Lower lobe of right lung (tissue), 2 donors: ENCODE measurements at regions of chr18 and their contacts with region 1.

Region 1: GRCh38 chr18:21191596-21192307 is 50.3 kb upstream of the GREB1L start:
- DNase-seq: peak; percentile 61
- ATAC-seq: peak; percentile 71 to 75
- H3K4me3 ChIP-seq: no peak overlapping the region
- H3K27ac ChIP-seq: no peak overlapping the region
- H3K4me1 ChIP-seq: no peaks in the 10 kb centered on the region
- H3K27me3 ChIP-seq: no peaks in the 10 kb centered on the region
- CTCF ChIP-seq: peak; percentile 57

Region 2: DNA sequence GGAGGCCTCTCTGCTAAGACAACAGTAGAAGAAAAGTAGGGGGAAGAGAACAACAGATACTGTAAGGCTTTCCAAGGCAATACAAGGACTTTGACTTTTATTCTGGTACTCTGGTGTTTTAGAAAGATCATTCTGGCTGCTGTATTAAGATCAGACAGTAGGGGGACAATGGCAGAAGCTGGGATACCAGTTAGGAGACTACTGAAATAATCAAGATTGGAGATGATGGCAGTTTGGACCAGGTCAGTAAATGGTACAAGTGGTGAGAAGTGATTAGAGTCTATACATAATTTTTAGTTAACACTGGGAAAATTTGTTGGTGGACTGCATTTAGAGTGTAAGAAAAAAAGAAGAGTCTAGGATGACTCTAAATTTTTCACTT is 219.9 kb before region 1 on chr18:
- intact Hi-C with region 1: no loop called
- DNase-seq: no peak
- ATAC-seq: peak in 1 of 2 donors; percentile 45
- H3K4me3 ChIP-seq: no peak overlapping the region
- H3K27ac ChIP-seq: no peak overlapping the region
- H3K4me1 ChIP-seq: no peaks in the 10 kb centered on the region
- H3K27me3 ChIP-seq: no peaks in the 10 kb centered on the region
- CTCF ChIP-seq: peak; percentile 45

Region 3: DNA sequence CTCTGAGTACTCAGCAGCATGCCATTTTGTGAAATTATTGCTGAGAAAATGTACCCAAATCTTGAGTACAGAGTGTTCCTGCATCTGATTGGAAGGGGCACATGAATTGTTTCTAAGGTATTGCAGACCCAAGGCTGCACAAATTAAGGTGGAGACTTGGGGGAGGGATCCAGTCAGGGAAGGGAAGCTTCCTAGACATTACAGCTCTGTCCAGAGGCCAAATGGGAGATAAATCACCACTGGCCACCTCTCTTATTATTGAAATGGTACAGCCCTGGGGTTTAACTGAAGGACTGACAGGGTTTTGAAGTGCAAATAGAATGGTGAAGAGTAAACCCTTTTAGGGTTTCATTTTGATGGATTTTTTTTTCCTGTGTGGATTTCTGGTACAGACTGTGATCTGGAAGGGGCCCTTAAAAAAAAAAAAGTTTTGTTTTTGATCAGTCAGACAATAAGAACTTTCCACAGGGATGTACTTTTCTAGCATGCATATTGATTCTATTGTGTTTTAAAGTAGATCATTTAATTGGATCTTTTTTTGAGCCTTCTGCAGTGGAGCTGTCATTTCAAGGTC is 169.6 kb after region 1 on chr18:
- intact Hi-C with region 1: no loop called
- DNase-seq: no peak
- ATAC-seq: no peak
- H3K4me3 ChIP-seq: no peak overlapping the region
- H3K27ac ChIP-seq: no peak overlapping the region
- H3K4me1 ChIP-seq: no peaks in the 10 kb centered on the region
- H3K27me3 ChIP-seq: no peaks in the 10 kb centered on the region
- CTCF ChIP-seq: no peak

Region 4: DNA sequence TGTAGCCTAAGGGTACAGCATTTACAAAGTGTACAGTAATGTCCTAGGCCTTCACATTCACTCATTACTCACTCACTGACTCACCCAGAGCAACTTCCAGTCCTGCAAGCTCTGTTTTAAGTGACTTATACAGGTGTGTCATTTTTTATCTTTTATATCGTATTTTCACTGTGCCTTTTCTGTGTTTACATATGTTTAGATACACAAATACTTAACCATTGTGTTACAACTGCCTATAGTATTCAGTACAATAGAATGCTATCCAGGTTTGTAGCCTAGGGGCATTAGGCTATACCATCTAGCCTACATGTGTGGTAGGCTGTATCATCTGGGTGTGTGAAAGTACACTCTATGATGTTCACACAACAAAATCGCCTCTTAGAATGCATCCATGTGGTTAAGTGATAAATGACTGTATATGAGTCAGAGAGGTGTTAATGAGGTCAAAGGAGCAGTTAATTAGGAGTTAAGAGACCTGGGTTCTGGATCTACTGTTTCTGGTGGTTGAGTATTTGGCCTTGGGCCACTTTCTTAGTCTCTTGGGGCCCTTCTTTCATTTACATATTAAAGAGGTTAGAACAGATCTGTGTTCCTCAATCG is 199.4 kb after region 1 on chr18:
- intact Hi-C with region 1: no loop called
- DNase-seq: no peak
- ATAC-seq: no peak
- H3K4me3 ChIP-seq: no peak overlapping the region
- H3K27ac ChIP-seq: no peak overlapping the region
- H3K4me1 ChIP-seq: no peaks in the 10 kb centered on the region
- H3K27me3 ChIP-seq: no peaks in the 10 kb centered on the region
- CTCF ChIP-seq: no peak

Region 5: DNA sequence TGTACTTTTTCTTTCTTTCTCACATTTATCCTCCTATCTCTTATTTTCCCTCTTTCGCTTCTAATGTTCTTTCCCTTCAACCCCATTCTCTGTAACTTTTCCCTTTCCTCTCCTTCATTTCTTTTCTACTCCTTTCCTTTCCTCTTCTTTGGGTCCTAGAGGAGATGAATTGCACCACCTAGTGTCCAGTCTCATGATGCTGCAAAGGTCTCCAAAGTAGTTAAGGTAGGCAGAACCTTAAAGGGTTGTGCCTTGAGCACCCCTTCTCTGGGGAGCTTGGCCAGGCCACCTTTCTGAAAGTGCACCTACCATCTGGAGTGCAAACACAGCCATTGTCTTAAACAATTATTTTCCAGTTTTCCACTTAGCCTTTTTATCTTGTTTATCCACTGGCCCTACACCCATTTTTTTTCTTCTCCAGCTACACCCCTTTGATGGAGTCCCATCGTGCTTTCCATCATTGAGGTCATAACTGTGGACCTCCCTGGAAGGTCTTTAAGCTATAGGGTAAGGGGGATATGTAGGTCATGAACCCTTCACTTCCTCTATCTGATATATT is 252.8 kb after region 1 on chr18:
- intact Hi-C with region 1: loop called (anchors 10 kb)
- DNase-seq: no peak
- ATAC-seq: peak; percentile 47
- H3K4me3 ChIP-seq: no peak overlapping the region
- H3K27ac ChIP-seq: no peak overlapping the region
- H3K4me1 ChIP-seq: no peaks in the 10 kb centered on the region
- H3K27me3 ChIP-seq: no peaks in the 10 kb centered on the region
- CTCF ChIP-seq: peak; percentile 69